Vagina (tissue), 2 donors: ENCODE measurements at regions of chrX and their contacts with region 1.

Region 1: DNA sequence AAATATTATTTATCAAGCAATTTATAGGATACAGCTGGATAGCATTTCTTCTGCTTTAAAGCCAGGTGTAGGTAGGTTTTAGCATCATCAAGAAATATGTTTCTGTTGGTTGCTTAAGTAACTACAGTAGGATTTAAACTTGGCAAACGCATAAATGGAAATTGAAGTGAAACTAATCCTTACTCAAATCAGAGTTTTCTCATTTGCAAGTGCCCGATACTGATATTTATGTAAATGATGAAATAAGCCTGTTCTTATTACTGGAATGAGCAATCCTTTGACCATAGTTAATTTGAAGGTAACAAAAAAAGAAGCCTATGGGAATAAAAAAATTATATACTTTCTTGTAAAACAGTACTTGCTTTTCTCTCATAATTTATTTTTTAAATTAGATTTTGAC is 23.2 kb upstream of the PIGA start:
- DNase-seq: no peak
- H3K4me3 ChIP-seq: no peak overlapping the region
- H3K27ac ChIP-seq: no peak overlapping the region
- H3K4me1 ChIP-seq: no peaks in the 10 kb centered on the region
- H3K27me3 ChIP-seq: no peaks in the 10 kb centered on the region
- CTCF ChIP-seq: no peak
- POLR2A ChIP-seq: no peak

Region 2: DNA sequence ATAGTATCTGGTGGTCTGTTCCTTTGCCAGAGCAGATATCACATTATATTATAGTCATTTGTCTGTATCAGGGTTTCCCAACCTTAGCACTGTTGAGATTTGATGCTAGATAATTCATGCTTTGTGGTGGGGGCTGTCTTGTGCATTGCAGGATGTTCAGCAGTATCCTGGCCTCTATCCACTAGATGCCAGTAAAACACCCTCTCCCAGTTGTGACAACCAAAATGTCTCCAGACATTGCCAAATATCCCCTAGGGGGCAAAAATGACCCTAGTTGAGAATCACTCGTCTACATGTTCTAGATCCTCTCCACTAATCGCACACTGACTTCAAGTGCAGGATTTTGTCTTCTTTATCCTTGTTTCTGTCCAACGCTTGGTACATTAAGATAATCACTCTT is 646.4 kb before region 1 on chrX:
- intact Hi-C with region 1: no loop called
- DNase-seq: no peak
- H3K4me3 ChIP-seq: no peak overlapping the region
- H3K27ac ChIP-seq: no peak overlapping the region
- H3K4me1 ChIP-seq: no peaks in the 10 kb centered on the region
- H3K27me3 ChIP-seq: no peaks in the 10 kb centered on the region
- CTCF ChIP-seq: no peak
- POLR2A ChIP-seq: no peak

Region 3: DNA sequence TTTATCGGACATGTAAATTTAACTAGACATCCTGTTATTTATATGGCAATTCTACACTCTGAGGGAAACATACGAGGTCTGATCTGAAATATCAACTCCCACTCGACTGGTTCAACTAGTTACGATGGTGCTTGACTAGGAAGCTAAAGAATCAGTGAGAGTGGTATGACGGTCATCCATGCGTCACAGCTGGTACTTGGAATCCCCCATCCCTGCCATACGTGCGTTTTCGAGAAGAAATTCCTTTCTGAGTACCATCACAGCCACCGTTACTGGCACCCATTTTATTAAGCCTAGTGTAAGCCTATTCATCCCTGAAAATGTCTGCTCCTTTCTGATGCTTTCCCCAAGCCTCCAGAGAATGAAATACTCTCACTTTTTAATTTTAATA is 22.5 kb before region 1 on chrX:
- intact Hi-C with region 1: no loop called
- DNase-seq: no peak
- H3K4me3 ChIP-seq: peak overlapping the region; percentile 35 to 56
- H3K27ac ChIP-seq: no peak overlapping the region
- H3K4me1 ChIP-seq: peaks cover 13% of the 10 kb centered on the region
- H3K27me3 ChIP-seq: no peaks in the 10 kb centered on the region
- CTCF ChIP-seq: no peak
- POLR2A ChIP-seq: no peak

Region 4: DNA sequence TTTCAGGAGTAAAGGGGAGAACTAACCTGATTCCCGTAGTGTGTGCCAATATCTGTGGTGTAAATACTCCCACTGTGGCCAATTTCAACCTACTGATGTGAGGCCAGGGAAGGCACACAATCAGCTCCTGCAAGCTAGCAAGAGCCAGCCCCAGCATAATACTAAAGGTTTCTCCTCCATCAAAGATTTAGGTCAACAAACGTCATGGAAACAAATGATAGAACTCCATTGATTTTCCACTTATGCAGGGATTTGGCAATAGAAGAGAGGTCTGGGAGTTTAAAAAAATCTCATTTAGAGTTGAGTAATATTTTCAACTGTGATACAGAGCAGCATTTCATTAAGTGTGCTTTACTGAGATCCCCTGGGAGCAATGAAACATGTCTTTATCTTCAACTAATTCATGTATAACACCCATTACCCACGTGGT is 41.4 kb after region 1 on chrX:
- intact Hi-C with region 1: loop called (anchors 1 kb)
- DNase-seq: no peak
- H3K4me3 ChIP-seq: no peak overlapping the region
- H3K27ac ChIP-seq: no peak overlapping the region
- H3K4me1 ChIP-seq: no peaks in the 10 kb centered on the region
- H3K27me3 ChIP-seq: no peaks in the 10 kb centered on the region
- CTCF ChIP-seq: no peak
- POLR2A ChIP-seq: no peak